Sigmoid colon (tissue), 7 donors: ENCODE measurements at regions of chr2 and their contacts with region 1.

Region 1: GRCh38 chr2:203327901-203328759 is at the start of gene ABI2:
- DNase-seq: peak; percentile 91
- H3K4me3 ChIP-seq: peak within 1 kb of the TSS; percentile 82 to 95 (median 86)
- H3K27ac ChIP-seq: peak within 1 kb of the TSS; percentile 85 to 90 (median 88)
- H3K4me1 ChIP-seq: peaks cover 0 to 26% (median 19%) of the 10 kb centered on the region in 4 donors
- H3K27me3 ChIP-seq: no peaks in the 10 kb centered on the region
- CTCF ChIP-seq: no peak
- EP300 ChIP-seq: no peak
- POLR2A ChIP-seq: peak; percentile 15 to 16
- total RNA-seq, gene ABI2: 38.3 to 61.9 (median 49.0) TPM

Region 2: GRCh38 chr2:203238704-203239526 is 89.2 kb before region 1 on chr2 and contains the start of gene CYP20A1:
- intact Hi-C with region 1: loop called (anchors 2 kb)
- DNase-seq: peak; percentile 98
- H3K4me3 ChIP-seq: peak within 1 kb of the TSS; percentile 49 to 74 (median 68)
- H3K27ac ChIP-seq: peak within 1 kb of the TSS; percentile 91 to 95 (median 92)
- H3K4me1 ChIP-seq: peaks cover 0 to 25% (median 24%) of the 10 kb centered on the region in 4 donors
- H3K27me3 ChIP-seq: no peaks in the 10 kb centered on the region
- CTCF ChIP-seq: peak in 3 of 4 experiments; percentile 19 to 42 (median 40)
- EP300 ChIP-seq: peak in 2 of 4 donors; percentile 36 to 49
- POLR2A ChIP-seq: peak; percentile 63 to 72
- total RNA-seq, gene CYP20A1: 22.7 to 35.4 (median 28.2) TPM

Region 3: DNA sequence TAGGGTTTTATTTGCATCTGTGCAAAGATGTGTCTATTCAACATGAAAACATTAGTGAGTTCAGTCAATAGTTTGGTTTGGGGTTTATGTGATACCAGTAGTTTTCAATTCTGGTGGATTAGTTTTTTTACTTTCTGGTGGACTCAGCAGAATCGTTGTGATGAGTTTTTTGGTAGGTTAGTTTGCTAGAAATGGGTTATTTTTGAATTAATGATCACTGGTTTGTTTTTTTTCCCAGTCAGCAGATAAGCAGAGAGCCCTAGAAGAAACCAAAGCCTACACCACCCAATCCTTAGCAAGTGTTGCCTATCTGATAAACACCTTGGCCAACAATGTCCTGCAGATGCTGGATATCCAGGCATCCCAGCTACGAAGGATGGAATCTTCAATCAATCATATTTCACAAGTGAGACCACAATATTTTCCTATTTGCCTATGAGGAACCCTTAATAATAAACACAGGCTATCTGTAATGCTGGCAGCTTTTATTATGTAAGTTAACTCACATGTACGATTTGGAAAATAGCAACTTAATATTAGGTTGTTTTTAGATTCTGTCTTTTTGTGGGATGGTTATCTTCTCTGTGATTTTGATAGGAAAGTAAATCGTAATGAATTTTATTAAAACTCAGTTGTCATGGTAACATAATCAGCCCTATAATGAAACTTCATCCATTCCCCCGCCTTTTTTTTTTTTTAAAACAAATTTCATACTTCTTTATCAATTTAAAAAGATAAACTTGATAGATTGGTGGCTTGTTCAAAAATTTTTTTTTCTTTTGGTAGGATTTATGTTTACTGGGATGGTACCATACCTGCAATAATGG is 38.7 kb after region 1 on chr2:
- intact Hi-C with region 1: no loop called
- DNase-seq: no peak
- H3K4me3 ChIP-seq: no peak overlapping the region
- H3K27ac ChIP-seq: no peak overlapping the region
- H3K4me1 ChIP-seq: peaks cover 0 to 9% (median 6%) of the 10 kb centered on the region in 4 donors
- H3K27me3 ChIP-seq: no peaks in the 10 kb centered on the region
- CTCF ChIP-seq: no peak
- EP300 ChIP-seq: no peak
- POLR2A ChIP-seq: no peak

Region 4: DNA sequence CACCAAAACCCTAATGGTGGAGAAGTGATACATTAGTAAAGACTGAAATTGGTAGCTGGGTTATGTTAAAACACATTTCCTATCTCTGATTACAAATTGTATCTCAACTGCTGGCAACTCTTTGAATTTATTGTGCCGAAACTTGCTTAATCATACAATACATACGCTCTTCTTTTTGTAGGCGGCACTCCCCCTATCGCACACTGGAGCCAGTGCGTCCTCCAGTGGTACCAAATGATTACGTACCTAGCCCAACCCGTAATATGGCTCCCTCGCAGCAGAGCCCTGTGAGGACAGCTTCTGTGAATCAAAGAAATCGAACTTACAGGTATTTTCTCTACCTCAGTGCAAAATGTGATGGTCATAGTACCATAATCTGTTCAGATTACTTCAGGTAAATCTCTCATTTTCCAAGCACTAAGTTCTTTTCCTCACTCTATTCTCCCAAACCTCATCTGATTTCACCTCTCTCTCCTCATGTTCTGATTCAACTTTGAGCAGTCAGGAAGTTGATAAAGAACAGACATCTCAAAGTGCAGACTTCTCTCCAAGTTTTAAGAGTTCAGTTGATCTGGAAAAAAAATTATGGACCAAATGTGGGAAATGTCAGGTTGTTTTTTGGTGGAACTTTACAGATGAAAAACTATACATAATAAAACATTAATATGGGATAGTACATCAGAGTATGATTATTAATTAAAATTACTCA is 66.5 kb after region 1 on chr2:
- intact Hi-C with region 1: loop called (anchors 1 kb)
- DNase-seq: no peak
- H3K4me3 ChIP-seq: no peak overlapping the region
- H3K27ac ChIP-seq: peak overlapping the region in 2 of 4 donors; percentile 12 to 52
- H3K4me1 ChIP-seq: peaks cover 0 to 31% (median 18%) of the 10 kb centered on the region in 4 donors
- H3K27me3 ChIP-seq: no peaks in the 10 kb centered on the region
- CTCF ChIP-seq: no peak
- EP300 ChIP-seq: no peak
- POLR2A ChIP-seq: no peak

Region 5: GRCh38 chr2:203453858-203454451 is 125.8 kb after region 1 on chr2:
- intact Hi-C with region 1: loop called (anchors 5 kb)
- DNase-seq: no peak
- H3K4me3 ChIP-seq: no peak overlapping the region
- H3K27ac ChIP-seq: no peak overlapping the region
- H3K4me1 ChIP-seq: peaks cover 0 to 12% (median 5%) of the 10 kb centered on the region in 4 donors
- H3K27me3 ChIP-seq: no peaks in the 10 kb centered on the region
- CTCF ChIP-seq: peak; percentile 43 to 66 (median 56)
- EP300 ChIP-seq: no peak
- POLR2A ChIP-seq: no peak

Region 6: GRCh38 chr2:203714106-203714505 is 386.0 kb after region 1 on chr2:
- intact Hi-C with region 1: no loop called
- DNase-seq: no peak
- H3K4me3 ChIP-seq: no peak overlapping the region
- H3K27ac ChIP-seq: no peak overlapping the region
- H3K4me1 ChIP-seq: no peaks in the 10 kb centered on the region
- H3K27me3 ChIP-seq: no peaks in the 10 kb centered on the region
- CTCF ChIP-seq: no peak
- EP300 ChIP-seq: no peak
- POLR2A ChIP-seq: no peak